ENCODE measurements at regions of chr2 and their contacts with region 1.

Region 1: GRCh38 chr2:48319863-48320262 is 210.1 kb upstream of the STON1 start:
- H3K4me3 Mint-ChIP-seq: no peak overlapping the region
- H3K27ac Mint-ChIP-seq: peak overlapping the region; percentile 83
- H3K4me1 Mint-ChIP-seq: peaks cover 45% of the 10 kb centered on the region
- H3K27me3 Mint-ChIP-seq: no peaks in the 10 kb centered on the region

Region 2: GRCh38 chr2:48397846-48398245 is 78.0 kb after region 1 on chr2:
- intact Hi-C with region 1: no loop called
- H3K4me3 Mint-ChIP-seq: no peak overlapping the region
- H3K27ac Mint-ChIP-seq: no peak overlapping the region
- H3K4me1 Mint-ChIP-seq: peaks cover 8% of the 10 kb centered on the region
- H3K27me3 Mint-ChIP-seq: no peaks in the 10 kb centered on the region

Region 3: DNA sequence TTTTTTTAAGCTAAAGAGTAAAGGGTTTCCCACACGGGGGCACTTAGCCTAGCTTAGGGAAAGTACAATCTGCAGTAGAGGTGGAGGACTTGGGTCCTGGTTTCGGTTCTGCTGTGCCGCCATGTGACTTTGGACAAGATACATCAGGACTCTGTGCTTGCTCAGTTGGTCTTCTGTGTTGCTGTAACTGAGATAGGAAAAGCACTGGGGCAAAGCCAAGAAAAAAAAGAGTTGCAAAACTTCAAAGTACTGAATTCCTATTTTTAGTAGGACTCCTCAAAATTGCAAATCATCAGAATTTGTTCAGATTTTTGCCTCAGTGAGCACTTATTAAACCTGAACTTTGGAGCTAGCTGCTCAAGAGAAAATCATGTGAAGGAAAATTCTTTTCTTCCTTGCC is 113.8 kb after region 1 on chr2:
- intact Hi-C with region 1: loop called (anchors 5 kb)
- H3K4me3 Mint-ChIP-seq: peak overlapping the region; percentile 23
- H3K27ac Mint-ChIP-seq: peak overlapping the region; percentile 80
- H3K4me1 Mint-ChIP-seq: peaks cover 77% of the 10 kb centered on the region
- H3K27me3 Mint-ChIP-seq: no peaks in the 10 kb centered on the region

Measured in dendritic cell treated with granulocyte-macrophage colony-stimulating factor and Interleukin-4, amounts not matched to agents 40 ng/mL and 50 ng/mL, for 4 days (primary cell).